ENCODE measurements at regions of chr2 and their contacts with region 1.

Region 1: DNA sequence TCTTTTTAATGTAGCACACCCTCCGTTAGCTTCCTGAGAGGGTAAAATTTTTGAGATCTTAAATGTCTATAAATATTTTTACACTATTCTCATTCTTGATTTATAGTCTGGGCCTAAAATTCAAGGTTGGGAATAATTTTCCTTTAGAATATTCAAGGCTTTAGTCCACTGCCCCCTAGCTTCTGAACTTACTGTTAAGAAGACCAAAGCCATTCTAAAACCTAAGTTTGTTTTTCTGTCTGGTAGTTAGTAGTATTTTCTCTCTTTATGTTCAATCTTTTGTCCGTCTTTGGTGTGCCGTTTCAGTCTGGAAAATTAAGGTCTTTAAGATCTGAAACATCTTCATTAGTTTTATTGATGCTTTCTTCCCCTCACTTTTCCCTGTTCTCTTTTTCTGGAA is 14.5 kb downstream of the OSBPL6 start:
- DNase-seq: no peak
- H3K4me3 ChIP-seq: no peak overlapping the region
- H3K27ac ChIP-seq: no peak overlapping the region
- H3K27me3 ChIP-seq: no peaks in the 10 kb centered on the region
- CTCF ChIP-seq: peak; percentile 52

Region 2: DNA sequence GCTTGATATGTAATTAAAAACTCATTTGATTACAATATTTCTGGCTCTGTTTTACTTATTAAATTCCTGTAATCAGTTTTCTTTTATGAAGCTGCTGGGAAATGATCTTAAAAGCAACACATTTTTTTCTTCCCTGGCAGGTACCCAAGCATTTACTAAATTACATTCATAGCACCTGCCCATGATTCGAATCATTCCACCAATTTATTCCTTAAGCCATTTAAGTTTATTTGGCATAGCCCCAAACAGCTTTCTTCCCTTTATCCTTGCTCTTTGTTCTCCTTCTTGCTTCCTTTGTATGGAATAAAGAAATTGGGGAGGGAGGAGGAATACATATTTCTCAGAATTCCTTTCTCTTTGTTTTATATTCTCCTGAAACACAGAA is 574.9 kb before region 1 on chr2:
- CTCF ChIA-PET with region 1: no interaction called
- POLR2A ChIA-PET with region 1: no interaction called
- DNase-seq: no peak
- H3K4me3 ChIP-seq: no peak overlapping the region
- H3K27ac ChIP-seq: no peak overlapping the region
- H3K27me3 ChIP-seq: peaks cover 4% of the 10 kb centered on the region
- CTCF ChIP-seq: no peak

Region 3: GRCh38 chr2:177929662-177930522 is 278.9 kb before region 1 on chr2:
- CTCF ChIA-PET with region 1: no interaction called
- POLR2A ChIA-PET with region 1: no interaction called
- DNase-seq: no peak
- H3K4me3 ChIP-seq: no peak overlapping the region
- H3K27ac ChIP-seq: no peak overlapping the region
- H3K27me3 ChIP-seq: no peaks in the 10 kb centered on the region
- CTCF ChIP-seq: no peak

Region 4: GRCh38 chr2:178025551-178026185 is 183.1 kb before region 1 on chr2:
- CTCF ChIA-PET with region 1: no interaction called
- POLR2A ChIA-PET with region 1: no interaction called
- DNase-seq: no peak
- H3K4me3 ChIP-seq: no peak overlapping the region
- H3K27ac ChIP-seq: no peak overlapping the region
- H3K27me3 ChIP-seq: no peaks in the 10 kb centered on the region
- CTCF ChIP-seq: no peak

Region 5: DNA sequence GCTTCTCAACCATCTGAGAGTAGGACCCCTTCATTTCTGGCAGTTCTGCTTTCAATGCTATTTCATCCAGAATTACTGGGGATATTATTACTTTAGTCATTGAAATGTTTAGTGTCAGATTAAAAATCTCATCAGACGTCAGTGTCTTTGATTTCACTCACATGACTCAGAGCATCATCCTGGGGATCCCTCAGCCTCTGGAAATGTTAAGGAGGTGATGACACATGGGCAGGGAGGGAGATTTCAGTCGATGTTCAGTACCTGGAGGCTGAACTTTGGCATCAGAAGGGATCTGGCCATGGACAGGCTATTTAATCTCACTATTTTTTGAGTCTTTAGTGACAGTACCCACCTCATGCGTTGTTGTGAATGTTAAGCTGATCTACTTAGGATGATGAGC is 24.6 kb after region 1 on chr2:
- CTCF ChIA-PET with region 1: interaction called, 10 read pairs
- POLR2A ChIA-PET with region 1: no interaction called
- DNase-seq: no peak
- H3K4me3 ChIP-seq: no peak overlapping the region
- H3K27ac ChIP-seq: no peak overlapping the region
- H3K27me3 ChIP-seq: no peaks in the 10 kb centered on the region
- CTCF ChIP-seq: no peak